Cardiac septum (tissue), 1 donor: ENCODE measurements at regions of chr17 and their contacts with region 1.

Region 1: DNA sequence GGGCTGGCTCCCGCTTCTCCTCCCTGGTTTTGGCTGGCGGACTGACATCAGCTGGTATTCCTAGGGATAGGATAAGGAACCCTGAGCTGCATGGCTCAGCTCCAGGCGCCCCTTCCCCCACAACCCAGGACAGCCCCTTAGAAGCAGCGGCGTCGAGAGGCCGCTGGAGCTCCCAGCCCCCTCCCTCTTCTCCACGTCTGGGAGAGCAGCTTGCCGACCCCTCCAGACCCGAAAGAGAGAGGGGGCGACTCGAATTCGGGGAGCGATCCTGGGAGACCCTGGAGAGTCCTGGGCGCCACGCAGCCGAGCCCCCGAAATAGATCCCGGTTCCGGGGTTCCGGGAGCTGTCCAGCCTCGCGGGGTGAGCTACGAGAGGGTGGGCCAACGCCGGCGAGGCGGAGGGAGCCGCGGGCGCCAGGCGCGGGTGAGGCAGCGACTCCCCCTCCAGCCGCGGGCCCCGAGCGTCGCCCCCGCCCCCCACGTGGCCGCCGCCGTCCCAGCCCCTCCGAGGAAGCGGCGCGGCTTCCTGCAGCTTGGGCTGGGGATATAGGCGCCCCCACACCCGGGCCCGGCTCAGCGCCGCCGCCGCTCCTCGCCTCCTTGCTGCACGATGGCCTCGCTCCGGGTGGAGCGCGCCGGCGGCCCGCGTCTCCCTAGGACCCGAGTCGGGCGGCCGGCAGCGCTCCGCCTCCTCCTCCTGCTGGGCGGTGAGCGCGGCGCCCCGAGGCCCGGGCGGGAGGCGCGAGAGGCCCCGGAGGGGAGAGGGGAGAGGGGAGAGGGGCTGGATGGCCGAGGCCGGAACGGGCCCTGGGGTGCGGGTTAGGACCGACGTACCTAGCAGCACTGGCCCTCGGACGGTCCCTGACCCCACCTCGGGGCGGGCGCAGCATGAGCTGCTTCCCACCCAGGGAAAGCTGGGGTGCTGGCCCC is at the start of gene RAMP2:
- DNase-seq: peak; percentile 68
- total RNA-seq, gene RAMP2: 45.8 TPM

Region 2: DNA sequence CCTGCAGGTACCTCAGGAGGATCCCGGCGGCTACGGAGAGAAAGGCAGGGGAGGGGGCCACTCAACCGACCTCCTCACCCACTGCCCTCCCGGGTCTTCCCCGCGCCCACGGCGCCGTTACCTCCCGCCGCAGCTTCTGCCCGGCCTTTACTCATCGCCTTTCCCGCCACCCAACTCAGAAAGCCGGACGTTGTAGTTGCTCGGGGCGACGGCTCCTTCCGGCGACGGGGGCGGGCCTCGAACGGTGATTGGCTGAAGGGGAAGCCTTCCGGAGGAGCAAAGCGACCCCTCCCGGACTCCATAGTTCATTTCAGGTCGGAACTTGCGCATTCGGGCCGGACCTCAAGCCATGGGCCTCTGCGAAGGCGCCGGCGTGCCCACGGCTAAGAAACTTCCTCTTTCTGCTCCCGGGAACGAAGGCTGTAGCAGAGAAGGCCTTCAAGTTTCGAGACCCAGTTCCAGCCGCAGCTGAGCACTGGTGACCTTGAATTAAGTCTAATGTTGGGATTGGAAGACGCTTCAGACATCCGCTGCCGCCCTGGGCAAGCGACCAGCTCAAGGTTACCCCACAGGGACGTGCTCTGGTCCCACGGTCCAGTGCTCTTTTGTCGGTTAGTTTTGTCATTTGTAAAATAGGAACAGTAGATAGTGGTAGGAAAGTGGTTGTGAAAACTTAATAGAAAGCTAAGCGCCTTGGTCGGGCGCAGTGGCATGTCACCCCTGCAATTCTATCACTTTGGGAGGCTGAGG is 183.2 kb before region 1 on chr17 and contains the start of gene PSMC3IP:
- intact Hi-C with region 1: loop called (anchors 5 kb)
- DNase-seq: peak; percentile 97
- total RNA-seq, gene PSMC3IP: 1.8 TPM

Region 3: GRCh38 chr17:42659079-42659931 is 101.6 kb before region 1 on chr17 and contains the start of gene TUBG2:
- intact Hi-C with region 1: no loop called
- DNase-seq: peak; percentile 94
- total RNA-seq, gene TUBG2: 21.9 TPM

Region 4: DNA sequence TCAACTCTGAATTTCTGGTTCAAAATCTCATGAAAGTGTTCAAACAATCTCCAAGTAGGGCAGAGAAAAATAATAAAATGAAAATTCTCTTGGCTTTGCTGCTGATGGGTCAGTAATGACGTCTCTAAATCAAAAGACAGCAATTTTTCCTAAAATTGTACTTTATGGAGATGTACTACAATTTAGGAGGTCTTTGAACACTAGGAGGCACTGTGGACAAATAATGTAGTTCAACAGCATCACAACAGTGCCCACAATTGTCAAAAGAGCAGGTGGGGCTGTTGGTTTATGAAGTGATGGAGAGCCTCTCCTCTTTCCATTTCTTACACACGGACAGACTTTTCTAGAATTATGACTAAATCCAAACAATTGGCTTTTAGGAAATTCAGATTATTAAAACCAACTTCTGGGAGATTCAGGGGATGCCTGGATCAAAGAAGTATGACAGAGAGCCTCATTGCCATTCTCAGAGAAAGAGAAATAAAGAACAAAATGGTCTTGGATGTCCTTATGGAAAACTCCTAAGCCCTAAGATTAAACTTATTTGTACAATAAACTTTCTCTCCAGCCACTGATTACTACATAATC is 39.8 kb before region 1 on chr17:
- intact Hi-C with region 1: loop called (anchors 1 kb)
- DNase-seq: no peak

Region 5: DNA sequence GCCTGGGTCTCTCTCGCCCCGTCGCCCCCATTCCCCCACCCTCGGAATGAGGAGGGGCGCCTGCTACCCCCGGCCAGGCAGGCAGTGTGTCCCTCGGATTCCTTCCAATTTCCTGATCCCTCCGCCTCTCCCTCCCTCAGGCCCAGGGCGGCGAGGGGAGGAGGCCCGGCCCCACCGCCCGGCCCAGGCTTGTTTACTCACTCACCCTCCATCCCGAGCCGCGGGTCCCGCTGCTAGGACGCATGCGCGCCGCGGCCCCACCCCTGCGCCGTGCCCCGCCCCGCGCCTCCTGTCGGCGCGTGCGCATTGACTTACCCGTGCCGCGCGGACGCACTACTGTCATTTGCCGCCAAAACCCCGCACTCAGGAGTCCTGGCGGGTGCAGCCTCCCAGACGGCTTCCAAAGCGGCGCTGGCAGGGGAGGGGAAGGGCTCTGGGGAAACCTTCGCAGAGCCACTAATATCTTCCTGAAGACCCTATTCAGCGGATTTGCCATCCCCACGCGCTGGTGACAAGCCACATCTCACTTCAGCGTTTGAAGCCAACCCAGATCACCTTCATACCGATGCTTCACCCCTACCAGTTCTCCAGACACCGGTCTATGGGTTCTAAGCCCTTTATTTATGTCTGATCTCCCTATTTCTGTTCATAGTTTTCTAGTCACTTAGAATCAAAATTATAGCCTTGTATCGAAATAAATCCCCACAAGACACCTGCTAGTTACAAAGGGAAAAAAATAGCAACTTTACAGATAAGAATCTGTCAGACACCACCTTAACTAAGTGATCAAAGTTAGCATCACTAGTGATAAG is 15.9 kb before region 1 on chr17 and contains the start of gene EZH1:
- intact Hi-C with region 1: loop called (anchors 2 kb)
- DNase-seq: peak; percentile 95
- total RNA-seq, gene EZH1: 45.4 TPM

Region 6: GRCh38 chr17:42850954-42851353 is 90.0 kb after region 1 on chr17 and contains the start of gene AOC3:
- intact Hi-C with region 1: no loop called
- DNase-seq: no peak
- total RNA-seq, gene AOC3: 12.9 TPM